PC-3 (cell line): ENCODE measurements at regions of chr7 and their contacts with region 1.

Region 1: GRCh38 chr7:47453093-47454049 is 128.5 kb downstream of the TNS3 start:
- DNase-seq: peak; percentile 93
- ATAC-seq: peak; percentile 75
- H3K4me3 ChIP-seq: peak overlapping the region; percentile 68
- H3K27ac ChIP-seq: peak overlapping the region; percentile 95
- H3K4me1 ChIP-seq: peaks cover 52% of the 10 kb centered on the region
- H3K27me3 ChIP-seq: no peaks in the 10 kb centered on the region
- CTCF ChIP-seq: 0 out of 2 replicates have a peak, but pooled peaks have one; percentile 9

Region 2: GRCh38 chr7:47474937-47475878 is 21.8 kb after region 1 on chr7:
- CTCF ChIA-PET with region 1: interaction called, 5 read pairs
- POLR2A ChIA-PET with region 1: no interaction called
- intact Hi-C with region 1: loop called (anchors 1 kb)
- DNase-seq: peak; percentile 96
- ATAC-seq: peak; percentile 98
- H3K4me3 ChIP-seq: no peak overlapping the region; the same call in 1 of the 2 replicates
- H3K27ac ChIP-seq: peak overlapping the region; percentile 78
- H3K4me1 ChIP-seq: peaks cover 31% of the 10 kb centered on the region
- H3K27me3 ChIP-seq: no peaks in the 10 kb centered on the region
- CTCF ChIP-seq: 0 out of 2 replicates have a peak, but pooled peaks have one; percentile 20

Region 3: GRCh38 chr7:47508389-47509380 is 55.3 kb after region 1 on chr7:
- CTCF ChIA-PET with region 1: no interaction called
- POLR2A ChIA-PET with region 1: no interaction called
- intact Hi-C with region 1: no loop called
- DNase-seq: peak; percentile 12
- ATAC-seq: no peak
- H3K4me3 ChIP-seq: no peak overlapping the region
- H3K27ac ChIP-seq: no peak overlapping the region
- H3K4me1 ChIP-seq: peaks cover 20% of the 10 kb centered on the region
- H3K27me3 ChIP-seq: no peaks in the 10 kb centered on the region
- CTCF ChIP-seq: no peak

Region 4: GRCh38 chr7:47534322-47535034 is 81.1 kb after region 1 on chr7:
- CTCF ChIA-PET with region 1: interaction called, 9 read pairs
- POLR2A ChIA-PET with region 1: interaction called, 4 read pairs
- intact Hi-C with region 1: loop called (anchors 1 kb)
- DNase-seq: peak; percentile 96
- ATAC-seq: peak; percentile 73
- H3K4me3 ChIP-seq: peak overlapping the region; percentile 25; the same call in 1 of the 2 replicates
- H3K27ac ChIP-seq: peak overlapping the region; percentile 61
- H3K4me1 ChIP-seq: peaks cover 63% of the 10 kb centered on the region
- H3K27me3 ChIP-seq: no peaks in the 10 kb centered on the region
- CTCF ChIP-seq: peak; percentile 39

Region 5: DNA sequence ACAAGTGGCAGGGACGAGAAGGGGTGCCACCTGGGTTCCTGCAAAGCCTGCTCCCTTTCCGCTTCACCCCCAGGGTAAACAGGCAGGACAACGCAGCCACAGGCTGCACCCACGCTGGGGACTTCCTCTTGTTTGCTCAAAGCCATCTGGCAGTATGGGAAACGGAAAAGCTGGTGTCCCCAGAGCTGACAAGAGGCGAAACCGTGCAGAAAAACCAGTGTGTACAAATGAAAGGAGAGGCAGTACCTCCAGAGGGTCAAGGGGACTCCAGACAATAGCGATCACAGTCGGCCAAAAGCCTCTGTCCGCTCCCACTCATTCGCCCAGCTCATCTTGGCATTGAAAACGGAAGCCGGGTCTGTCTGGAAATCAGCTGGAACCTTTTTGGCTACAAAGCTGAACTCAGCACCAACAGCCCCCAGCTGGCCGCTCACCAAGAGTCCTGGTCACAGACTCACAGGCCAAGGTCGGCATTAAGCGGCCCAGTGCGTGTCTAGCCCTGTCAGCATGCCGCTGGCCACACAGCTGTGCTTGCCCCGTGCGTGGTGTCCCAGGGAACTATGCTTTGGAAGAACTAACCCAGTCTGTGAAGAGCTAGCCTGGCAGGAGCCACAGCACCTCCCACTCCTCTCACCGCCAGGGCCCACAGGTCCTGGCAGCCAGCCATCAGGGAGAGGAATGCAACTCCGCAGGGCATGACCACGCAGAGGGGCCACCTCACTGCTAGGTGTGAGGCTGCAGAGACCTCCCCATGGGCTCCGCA is 118.1 kb after region 1 on chr7:
- CTCF ChIA-PET with region 1: interaction called, 3 read pairs
- POLR2A ChIA-PET with region 1: no interaction called
- intact Hi-C with region 1: loop called (anchors 1 kb)
- DNase-seq: peak; percentile 84
- ATAC-seq: peak; percentile 50
- H3K4me3 ChIP-seq: peak overlapping the region; percentile 40
- H3K27ac ChIP-seq: peak overlapping the region; percentile 95
- H3K4me1 ChIP-seq: peaks cover 62% of the 10 kb centered on the region
- H3K27me3 ChIP-seq: no peaks in the 10 kb centered on the region
- CTCF ChIP-seq: no peak

Region 6: DNA sequence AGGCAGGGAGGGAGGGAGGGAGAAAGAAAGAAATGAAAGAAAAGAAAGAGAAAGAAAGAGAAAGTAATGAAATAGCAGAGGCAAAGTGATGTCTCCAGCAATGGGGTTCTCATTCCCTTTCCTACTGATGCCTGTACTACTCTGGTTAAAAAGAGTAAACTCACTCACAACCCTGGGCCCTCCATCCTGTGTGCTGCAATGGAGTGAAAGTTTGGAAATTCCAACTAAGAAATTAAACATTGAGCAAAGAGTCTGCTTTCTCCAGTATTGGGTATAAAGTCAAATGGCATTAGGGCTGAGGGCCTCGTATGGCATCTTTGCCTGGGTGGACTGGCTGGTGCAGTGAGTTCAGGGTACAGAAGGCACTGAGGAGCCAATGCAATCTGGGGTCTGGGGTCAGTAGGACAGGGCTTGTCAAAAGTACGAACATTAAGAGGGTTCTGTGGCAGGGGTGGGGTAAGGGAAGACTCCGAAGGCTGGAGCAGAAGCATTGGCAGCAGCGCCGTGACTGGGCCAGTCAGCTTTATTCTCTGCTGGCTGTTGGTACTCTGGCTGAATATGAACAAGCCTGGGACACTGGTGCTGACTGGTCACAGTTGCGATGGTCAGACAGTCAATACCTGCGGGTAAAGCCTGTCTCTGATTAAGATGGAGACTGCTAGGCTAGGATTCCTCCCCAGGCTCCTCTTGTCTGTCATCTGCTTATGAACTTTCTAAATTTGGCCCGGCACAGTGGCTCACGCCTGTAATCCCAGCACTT is 152.6 kb after region 1 on chr7:
- CTCF ChIA-PET with region 1: interaction called, 3 read pairs
- POLR2A ChIA-PET with region 1: no interaction called
- intact Hi-C with region 1: loop called (anchors 1 kb)
- DNase-seq: no peak
- ATAC-seq: no peak
- H3K4me3 ChIP-seq: no peak overlapping the region
- H3K27ac ChIP-seq: peak overlapping the region; percentile 87
- H3K4me1 ChIP-seq: peaks cover 40% of the 10 kb centered on the region
- H3K27me3 ChIP-seq: no peaks in the 10 kb centered on the region
- CTCF ChIP-seq: no peak